CD4-positive, alpha-beta memory T cell (primary cell): ENCODE measurements at regions of chr22 and their contacts with region 1.

Region 1: DNA sequence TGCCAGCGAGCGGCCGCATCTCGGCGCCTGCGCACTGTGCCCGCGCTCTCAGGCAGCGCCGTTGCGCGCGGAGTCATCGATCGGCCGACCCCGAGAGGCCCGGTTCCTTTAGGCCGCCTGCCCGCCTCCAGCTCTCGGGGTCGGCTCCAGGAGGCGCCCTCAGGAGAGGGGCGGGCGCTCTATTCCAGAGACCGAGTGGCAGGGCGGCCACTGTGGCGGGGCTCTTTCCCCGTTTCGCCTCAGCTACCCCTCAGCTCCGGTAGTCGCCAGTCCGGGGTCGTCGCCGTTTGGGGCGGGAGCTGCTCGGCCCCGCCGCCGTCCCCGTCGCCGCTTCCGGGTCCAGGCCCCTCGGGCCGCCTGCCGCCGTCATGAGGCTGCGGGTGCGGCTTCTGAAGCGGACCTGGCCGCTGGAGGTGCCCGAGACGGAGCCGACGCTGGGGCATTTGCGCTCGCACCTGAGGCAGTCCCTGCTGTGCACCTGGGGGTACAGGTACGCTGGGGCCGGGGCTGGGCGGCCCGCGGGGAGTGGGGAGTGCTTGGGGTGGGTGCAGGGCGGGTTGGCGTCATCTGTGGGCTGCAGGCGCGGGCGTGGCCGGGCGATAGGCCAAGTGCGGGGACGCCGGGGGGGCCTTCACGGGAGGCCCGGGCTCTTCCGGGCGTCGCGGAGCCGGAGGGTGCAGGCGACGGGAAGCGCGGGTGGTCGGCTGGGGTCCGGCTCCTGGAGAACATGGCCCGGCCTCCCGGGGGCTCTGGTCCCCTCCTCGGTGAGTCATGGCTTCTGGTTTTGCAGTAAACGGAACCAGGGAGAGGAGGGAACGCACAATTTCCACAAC is at the start of gene FBXO7:
- DNase-seq: peak; percentile 84 to 88 (median 86)
- H3K4me3 ChIP-seq: peak within 1 kb of the TSS; percentile 72 to 91
- H3K4me3 Mint-ChIP-seq: peak within 1 kb of the TSS; percentile 95 to 98 (median 97)
- H3K27ac ChIP-seq: peak within 1 kb of the TSS; percentile 95
- H3K27ac Mint-ChIP-seq: peak within 1 kb of the TSS; percentile 92 to 98 (median 96)
- H3K4me1 ChIP-seq: peaks cover 41% of the 10 kb centered on the region
- H3K4me1 Mint-ChIP-seq: peaks cover 20 to 45% (median 31%) of the 10 kb centered on the region in 4 donors
- H3K27me3 ChIP-seq: no peaks in the 10 kb centered on the region
- H3K27me3 Mint-ChIP-seq: no peaks in the 10 kb centered on the region
- total RNA-seq, gene FBXO7: 89.3 to 95.3 TPM

Region 2: DNA sequence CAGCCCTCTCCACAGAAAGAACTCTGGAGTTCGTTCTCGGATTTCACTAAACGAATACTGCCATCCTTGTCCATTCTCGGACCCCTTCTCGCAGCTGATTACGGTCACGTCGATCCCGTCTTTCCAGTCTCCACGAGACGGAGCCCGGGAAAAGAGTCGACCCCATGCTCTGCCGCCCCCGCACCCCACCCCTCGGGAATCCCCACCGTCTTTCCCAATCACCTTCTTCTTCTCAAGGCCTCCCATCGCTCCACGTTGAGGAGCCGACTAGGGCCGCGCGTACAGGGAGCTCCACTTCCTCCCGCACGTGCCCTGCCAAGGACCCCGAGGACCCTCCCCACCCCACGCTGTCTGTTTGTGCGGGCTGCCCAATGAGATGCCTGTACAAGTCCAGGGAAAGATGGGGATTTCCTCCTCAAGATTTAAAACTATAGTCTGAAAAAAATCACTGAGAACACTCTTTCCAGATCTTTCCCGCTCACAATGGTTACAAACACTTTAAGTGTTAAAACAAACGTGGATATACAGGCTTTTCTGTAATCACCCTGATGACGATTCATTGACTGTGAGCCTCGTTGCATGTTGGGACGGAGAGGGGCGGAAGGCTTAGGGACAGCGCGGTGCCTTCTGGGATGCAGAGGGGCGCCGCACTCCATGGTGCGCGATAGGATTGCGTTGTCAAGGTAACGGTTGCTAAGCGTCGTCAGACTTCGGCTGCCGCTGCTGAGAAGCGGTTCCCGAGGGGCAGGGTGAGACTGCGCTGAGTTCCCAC is 1883.1 kb before region 1 on chr22 and contains the start of gene PES1:
- CTCF ChIA-PET with region 1: no interaction called
- POLR2A ChIA-PET with region 1: no interaction called
- intact Hi-C with region 1: loop called (anchors 5 kb)
- DNase-seq: peak; percentile 96 to 98 (median 97)
- H3K4me3 ChIP-seq: peak within 1 kb of the TSS; percentile 50 to 99
- H3K4me3 Mint-ChIP-seq: no peak within 1 kb of the TSS
- H3K27ac ChIP-seq: peak within 1 kb of the TSS; percentile 78
- H3K27ac Mint-ChIP-seq: peak within 1 kb of the TSS in 1 of 7 donors; percentile 82
- H3K4me1 ChIP-seq: peaks cover 22% of the 10 kb centered on the region
- H3K4me1 Mint-ChIP-seq: peaks cover 0 to 10% (median 3%) of the 10 kb centered on the region in 4 donors
- H3K27me3 ChIP-seq: no peaks in the 10 kb centered on the region
- H3K27me3 Mint-ChIP-seq: peaks cover 3 to 7% of the 10 kb centered on the region in 2 donors
- total RNA-seq, gene PES1: 50.1 to 51.6 TPM

Region 3: DNA sequence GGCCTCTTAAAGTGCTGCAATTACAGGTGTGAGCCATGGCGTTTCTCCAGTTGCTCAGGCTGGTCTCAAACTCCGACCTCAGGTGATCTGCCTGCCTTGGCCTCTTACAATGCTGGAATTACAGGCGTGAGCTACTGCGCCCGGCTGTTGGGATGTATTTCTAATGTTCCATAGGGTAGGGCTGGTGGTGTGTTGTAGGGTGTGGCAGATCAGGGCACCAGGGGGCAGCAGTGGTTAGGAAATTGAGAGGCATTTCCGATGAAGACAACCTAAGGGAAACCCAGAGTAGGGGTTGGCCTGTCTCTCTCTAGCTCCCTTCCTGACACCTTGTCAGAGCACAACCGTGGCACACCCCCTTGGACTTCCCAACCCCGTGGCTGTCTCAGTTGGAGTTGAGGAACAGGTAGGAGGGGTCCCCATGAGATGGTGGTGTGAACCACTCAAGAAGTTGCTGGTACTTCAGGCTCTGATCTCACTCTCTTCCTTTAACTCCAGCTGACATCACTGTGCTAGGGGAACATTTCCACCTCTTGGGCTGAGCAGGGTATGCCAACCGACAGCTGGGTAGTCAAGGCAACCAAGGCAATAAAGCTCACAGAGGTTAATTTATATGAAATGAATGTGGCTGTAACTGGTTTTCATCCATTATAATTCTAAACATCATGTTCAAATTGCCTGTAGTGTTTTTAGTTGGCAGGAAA is 497.6 kb before region 1 on chr22:
- CTCF ChIA-PET with region 1: interaction called, 23 read pairs
- POLR2A ChIA-PET with region 1: interaction called, 3 read pairs
- intact Hi-C with region 1: no loop called
- DNase-seq: peak; percentile 67 to 73 (median 70)
- H3K4me3 ChIP-seq: no peak overlapping the region
- H3K4me3 Mint-ChIP-seq: no peak overlapping the region
- H3K27ac ChIP-seq: no peak overlapping the region
- H3K27ac Mint-ChIP-seq: peak overlapping the region in 1 of 7 donors; percentile 69
- H3K4me1 ChIP-seq: no peaks in the 10 kb centered on the region
- H3K4me1 Mint-ChIP-seq: peaks cover 0 to 4% (median 1%) of the 10 kb centered on the region in 4 donors
- H3K27me3 ChIP-seq: no peaks in the 10 kb centered on the region
- H3K27me3 Mint-ChIP-seq: no peaks in the 10 kb centered on the region

Region 4: GRCh38 chr22:32202539-32203180 is 272.2 kb before region 1 on chr22:
- CTCF ChIA-PET with region 1: no interaction called
- POLR2A ChIA-PET with region 1: no interaction called
- intact Hi-C with region 1: loop called (anchors 1 kb)
- DNase-seq: peak; percentile 32 to 56 (median 38)
- H3K4me3 ChIP-seq: peak overlapping the region; percentile 44 to 52
- H3K4me3 Mint-ChIP-seq: peak overlapping the region; percentile 81 to 93 (median 88)
- H3K27ac ChIP-seq: peak overlapping the region; percentile 15
- H3K27ac Mint-ChIP-seq: peak overlapping the region in 5 of 7 donors; percentile 50 to 95 (median 74)
- H3K4me1 ChIP-seq: peaks cover 64% of the 10 kb centered on the region
- H3K4me1 Mint-ChIP-seq: peaks cover 29 to 86% (median 62%) of the 10 kb centered on the region in 4 donors
- H3K27me3 ChIP-seq: no peaks in the 10 kb centered on the region
- H3K27me3 Mint-ChIP-seq: peaks cover 0 to 2% of the 10 kb centered on the region in 2 donors

Region 5: GRCh38 chr22:32411829-32412592 is 62.8 kb before region 1 on chr22 and contains the start of gene RTCB:
- CTCF ChIA-PET with region 1: interaction called, 21 read pairs
- POLR2A ChIA-PET with region 1: interaction called, 41 read pairs
- intact Hi-C with region 1: loop called (anchors 1 kb)
- DNase-seq: peak; percentile 90 to 93 (median 92)
- H3K4me3 ChIP-seq: peak within 1 kb of the TSS; percentile 44 to 92
- H3K4me3 Mint-ChIP-seq: peak within 1 kb of the TSS; percentile 95 to 100 (median 98)
- H3K27ac ChIP-seq: peak within 1 kb of the TSS; percentile 86
- H3K27ac Mint-ChIP-seq: peak within 1 kb of the TSS; percentile 96 to 99 (median 97)
- H3K4me1 ChIP-seq: peaks cover 39% of the 10 kb centered on the region
- H3K4me1 Mint-ChIP-seq: peaks cover 32 to 56% (median 42%) of the 10 kb centered on the region in 4 donors
- H3K27me3 ChIP-seq: no peaks in the 10 kb centered on the region
- H3K27me3 Mint-ChIP-seq: peaks cover 1 to 6% of the 10 kb centered on the region in 2 donors
- total RNA-seq, gene RTCB: 46.7 to 59.2 TPM

Region 6: GRCh38 chr22:32539631-32540421 is 65.0 kb after region 1 on chr22:
- CTCF ChIA-PET with region 1: no interaction called
- POLR2A ChIA-PET with region 1: no interaction called
- intact Hi-C with region 1: no loop called
- DNase-seq: no peak
- H3K4me3 ChIP-seq: no peak overlapping the region
- H3K4me3 Mint-ChIP-seq: no peak overlapping the region
- H3K27ac ChIP-seq: no peak overlapping the region
- H3K27ac Mint-ChIP-seq: no peak overlapping the region
- H3K4me1 ChIP-seq: no peaks in the 10 kb centered on the region
- H3K4me1 Mint-ChIP-seq: no peaks in the 10 kb centered on the region
- H3K27me3 ChIP-seq: no peaks in the 10 kb centered on the region
- H3K27me3 Mint-ChIP-seq: peaks cover 8 to 10% of the 10 kb centered on the region in 2 donors